BJ (cell line): ENCODE measurements at regions of chr5 and their contacts with region 1.

Region 1: GRCh38 chr5:72816311-72817145 is at the start of gene TNPO1:
- DNase-seq: peak; percentile 61
- H3K4me3 ChIP-seq: peak within 1 kb of the TSS; percentile 92
- H3K27me3 ChIP-seq: no peaks in the 10 kb centered on the region
- CTCF ChIP-seq: no peak
- polyA plus RNA-seq, gene TNPO1: 49.6 and 106 TPM in 2 replicates

Region 2: DNA sequence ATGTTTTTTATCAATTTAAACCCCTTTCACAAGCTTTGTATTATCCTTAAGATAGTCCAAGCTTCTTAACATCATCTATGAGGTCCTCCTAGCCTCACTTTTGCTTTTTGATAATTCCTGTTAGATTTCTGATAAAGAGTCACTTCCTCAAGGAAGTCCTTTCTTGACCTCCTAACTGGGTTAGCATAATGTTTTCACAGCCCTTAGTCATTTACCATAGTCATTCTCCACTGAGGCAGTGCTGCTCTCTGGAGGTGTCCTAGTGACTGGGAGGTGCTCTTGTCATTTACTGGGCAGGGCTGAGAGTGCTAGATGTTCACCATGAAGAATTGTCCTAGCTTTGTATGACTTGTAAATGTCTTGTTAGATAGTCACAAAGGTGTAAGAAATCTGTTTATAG is 26.3 kb after region 1 on chr5:
- CTCF ChIA-PET with region 1: interaction called, 13 read pairs
- POLR2A ChIA-PET with region 1: interaction called, 3 read pairs
- DNase-seq: no peak
- H3K4me3 ChIP-seq: no peak overlapping the region
- H3K27me3 ChIP-seq: no peaks in the 10 kb centered on the region
- CTCF ChIP-seq: no peak